Naive thymus-derived CD4-positive, alpha-beta T cell (primary cell): ENCODE measurements at regions of chr15 and their contacts with region 1.

Region 1: GRCh38 chr15:65054333-65055200 is 9.4 kb downstream of the SLC51B start:
- DNase-seq: peak; percentile 21 to 58 (median 45)
- ATAC-seq: peak; percentile 50
- H3K4me3 ChIP-seq: no peak overlapping the region
- H3K4me3 Mint-ChIP-seq: no peak overlapping the region
- H3K27ac ChIP-seq: no peak overlapping the region
- H3K27ac Mint-ChIP-seq: no peak overlapping the region
- H3K4me1 ChIP-seq: peaks cover 0 to 4% of the 10 kb centered on the region in 2 donors
- H3K4me1 Mint-ChIP-seq: peaks cover 0 to 16% (median 9%) of the 10 kb centered on the region in 7 donors
- H3K27me3 ChIP-seq: no peaks in the 10 kb centered on the region
- H3K27me3 Mint-ChIP-seq: peaks cover 0 to 3% (median 0%) of the 10 kb centered on the region in 5 donors

Region 2: DNA sequence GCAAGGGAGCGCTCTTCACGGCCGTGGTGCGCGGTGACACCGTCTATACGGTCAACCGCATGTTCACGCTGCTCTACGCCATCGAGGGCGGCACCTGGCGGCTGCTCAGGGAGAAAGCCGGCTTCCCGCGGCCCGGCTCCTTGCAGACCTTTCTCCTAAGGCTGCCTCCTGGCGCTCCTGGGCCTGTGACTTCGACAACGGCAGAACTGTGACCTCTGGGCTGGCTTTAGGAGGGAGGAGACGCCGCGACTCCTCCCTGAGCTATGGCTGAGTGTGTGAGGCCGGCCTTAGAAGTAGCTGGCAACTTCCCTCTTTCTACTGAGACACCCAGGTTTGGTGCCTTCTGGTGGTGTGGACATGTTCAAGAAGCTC is 23.4 kb after region 1 on chr15:
- CTCF ChIA-PET with region 1: no interaction called
- POLR2A ChIA-PET with region 1: no interaction called
- intact Hi-C with region 1: loop called in 1 of 2 experiments (anchors 1 kb)
- DNase-seq: peak in 8 of 9 donors; percentile 18 to 54 (median 39)
- ATAC-seq: peak; percentile 74
- H3K4me3 ChIP-seq: no peak overlapping the region
- H3K4me3 Mint-ChIP-seq: peak overlapping the region in 7 of 10 donors; percentile 11 to 80 (median 52)
- H3K27ac ChIP-seq: no peak overlapping the region
- H3K27ac Mint-ChIP-seq: peak overlapping the region in 1 of 9 donors; percentile 74
- H3K4me1 ChIP-seq: peaks cover 0 to 11% of the 10 kb centered on the region in 2 donors
- H3K4me1 Mint-ChIP-seq: peaks cover 13 to 25% (median 19%) of the 10 kb centered on the region in 7 donors
- H3K27me3 ChIP-seq: no peaks in the 10 kb centered on the region
- H3K27me3 Mint-ChIP-seq: peaks cover 16 to 35% (median 32%) of the 10 kb centered on the region in 5 donors

Region 3: DNA sequence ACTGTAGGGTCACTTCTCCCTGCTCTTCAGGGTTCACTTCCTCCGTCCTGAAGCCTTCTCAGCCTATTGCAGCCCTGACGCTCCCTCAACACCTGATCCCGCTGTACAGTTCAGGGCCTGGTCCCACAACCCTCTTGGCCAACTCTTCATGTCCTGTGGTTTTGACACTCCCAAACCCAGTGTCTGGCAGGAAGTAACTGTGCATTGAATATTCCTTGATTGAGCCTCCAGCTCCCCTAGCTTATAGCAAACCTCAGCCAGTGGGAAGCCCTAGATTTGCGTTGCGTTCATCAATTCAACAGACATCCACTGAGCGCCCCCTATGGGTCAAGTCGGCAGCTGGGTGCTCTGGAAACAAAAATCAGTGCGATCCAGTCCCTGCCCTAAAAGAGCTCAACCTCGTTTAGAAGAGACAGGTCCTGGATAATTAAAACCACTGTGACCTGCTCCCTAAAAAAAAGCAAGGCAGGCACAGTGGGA is 46.9 kb after region 1 on chr15:
- CTCF ChIA-PET with region 1: interaction called, 3 read pairs
- POLR2A ChIA-PET with region 1: no interaction called
- intact Hi-C with region 1: loop called (anchors 1 kb)
- DNase-seq: peak in 6 of 9 donors; percentile 18 to 49 (median 31)
- ATAC-seq: peak; percentile 68
- H3K4me3 ChIP-seq: no peak overlapping the region
- H3K4me3 Mint-ChIP-seq: no peak overlapping the region
- H3K27ac ChIP-seq: no peak overlapping the region
- H3K27ac Mint-ChIP-seq: peak overlapping the region in 2 of 9 donors; percentile 44 to 63
- H3K4me1 ChIP-seq: no peaks in the 10 kb centered on the region
- H3K4me1 Mint-ChIP-seq: peaks cover 0 to 12% (median 5%) of the 10 kb centered on the region in 7 donors
- H3K27me3 ChIP-seq: no peaks in the 10 kb centered on the region
- H3K27me3 Mint-ChIP-seq: no peaks in the 10 kb centered on the region

Region 4: DNA sequence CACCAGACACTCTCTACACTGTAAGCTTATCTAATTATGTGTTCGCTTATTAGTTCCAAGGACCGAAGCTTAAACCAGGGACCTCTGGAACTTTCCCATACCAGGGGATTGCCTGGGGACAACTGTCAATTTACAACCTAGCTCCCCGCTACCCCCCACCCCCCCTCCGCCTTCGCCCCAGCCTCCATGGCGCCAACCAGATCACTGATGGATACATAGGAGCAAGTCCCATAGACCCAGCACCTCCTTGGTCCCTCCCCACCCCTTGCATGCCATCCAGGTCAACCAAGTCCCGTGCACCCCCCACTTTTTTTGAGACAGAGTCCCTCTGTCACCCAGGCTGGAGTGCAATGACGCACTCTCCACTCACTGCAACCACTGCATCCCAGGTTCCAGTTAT is 80.0 kb after region 1 on chr15:
- CTCF ChIA-PET with region 1: no interaction called
- POLR2A ChIA-PET with region 1: no interaction called
- intact Hi-C with region 1: no loop called
- DNase-seq: no peak
- ATAC-seq: no peak
- H3K4me3 ChIP-seq: no peak overlapping the region
- H3K4me3 Mint-ChIP-seq: peak overlapping the region; percentile 88 to 100 (median 92)
- H3K27ac ChIP-seq: no peak overlapping the region
- H3K27ac Mint-ChIP-seq: peak overlapping the region in 6 of 9 donors; percentile 65 to 98 (median 96)
- H3K4me1 ChIP-seq: peaks cover 6 to 14% of the 10 kb centered on the region in 2 donors
- H3K4me1 Mint-ChIP-seq: peaks cover 18 to 37% (median 29%) of the 10 kb centered on the region in 7 donors
- H3K27me3 ChIP-seq: no peaks in the 10 kb centered on the region
- H3K27me3 Mint-ChIP-seq: peaks cover 0 to 2% (median 0%) of the 10 kb centered on the region in 5 donors

Region 5: GRCh38 chr15:65275728-65276126 is 221.2 kb after region 1 on chr15:
- CTCF ChIA-PET with region 1: no interaction called
- POLR2A ChIA-PET with region 1: no interaction called
- intact Hi-C with region 1: loop called in 1 of 2 experiments (anchors 1 kb)
- DNase-seq: no peak
- ATAC-seq: peak; percentile 27
- H3K4me3 ChIP-seq: no peak overlapping the region
- H3K4me3 Mint-ChIP-seq: peak overlapping the region in 7 of 10 donors; percentile 26 to 73 (median 67)
- H3K27ac ChIP-seq: peak overlapping the region; percentile 67
- H3K27ac Mint-ChIP-seq: peak overlapping the region in 8 of 9 donors; percentile 63 to 92 (median 78)
- H3K4me1 ChIP-seq: peaks cover 0 to 24% of the 10 kb centered on the region in 2 donors
- H3K4me1 Mint-ChIP-seq: peaks cover 19 to 80% (median 59%) of the 10 kb centered on the region in 7 donors
- H3K27me3 ChIP-seq: no peaks in the 10 kb centered on the region
- H3K27me3 Mint-ChIP-seq: no peaks in the 10 kb centered on the region

Region 6: GRCh38 chr15:65384895-65385858 is 330.6 kb after region 1 on chr15:
- CTCF ChIA-PET with region 1: interaction called, 3 read pairs
- POLR2A ChIA-PET with region 1: no interaction called
- intact Hi-C with region 1: loop called in 1 of 2 experiments (anchors 2 kb)
- DNase-seq: peak; percentile 65 to 85 (median 78)
- ATAC-seq: peak; percentile 92
- H3K4me3 ChIP-seq: peak overlapping the region; percentile 83
- H3K4me3 Mint-ChIP-seq: peak overlapping the region; percentile 85 to 91 (median 90)
- H3K27ac ChIP-seq: peak overlapping the region; percentile 49
- H3K27ac Mint-ChIP-seq: peak overlapping the region in 5 of 9 donors; percentile 41 to 78 (median 67)
- H3K4me1 ChIP-seq: peaks cover 4 to 9% of the 10 kb centered on the region in 2 donors
- H3K4me1 Mint-ChIP-seq: peaks cover 4 to 11% (median 8%) of the 10 kb centered on the region in 7 donors
- H3K27me3 ChIP-seq: no peaks in the 10 kb centered on the region
- H3K27me3 Mint-ChIP-seq: peaks cover 5 to 44% (median 14%) of the 10 kb centered on the region in 5 donors